IMR-90 (cell line): ENCODE measurements at regions of chr9 and their contacts with region 1.

Region 1: GRCh38 chr9:7055201-7055903 is 297.6 kb downstream of the KDM4C start:
- DNase-seq: no peak
- ATAC-seq: no peak
- H3K4me3 ChIP-seq: no peak overlapping the region
- H3K27ac ChIP-seq: no peak overlapping the region
- H3K4me1 ChIP-seq: peaks cover 3% of the 10 kb centered on the region
- H3K27me3 ChIP-seq: no peaks in the 10 kb centered on the region
- CTCF ChIP-seq: no peak
- POLR2A ChIP-seq: no peak
- RAD21 ChIP-seq: no peak

Region 2: GRCh38 chr9:6715755-6716643 is 339.4 kb before region 1 on chr9:
- CTCF ChIA-PET with region 1: no interaction called
- POLR2A ChIA-PET with region 1: no interaction called
- dilution Hi-C with region 1: no loop called
- in situ Hi-C with region 1: no loop called
- intact Hi-C with region 1: no loop called
- DNase-seq: no peak
- ATAC-seq: peak; percentile 81
- H3K4me3 ChIP-seq: peak overlapping the region; percentile 43
- H3K27ac ChIP-seq: no peak overlapping the region; the same call in 1 of the 2 replicates
- H3K4me1 ChIP-seq: peaks cover 2% of the 10 kb centered on the region; the same call in 1 of the 2 replicates
- H3K27me3 ChIP-seq: peaks cover 2% of the 10 kb centered on the region; the same call in 1 of the 2 replicates
- CTCF ChIP-seq: no peak
- POLR2A ChIP-seq: no peak
- RAD21 ChIP-seq: no peak

Region 3: GRCh38 chr9:6907772-6908381 is 147.5 kb before region 1 on chr9:
- CTCF ChIA-PET with region 1: interaction called, 4 read pairs
- POLR2A ChIA-PET with region 1: no interaction called
- dilution Hi-C with region 1: no loop called
- in situ Hi-C with region 1: no loop called
- intact Hi-C with region 1: loop called (anchors 2 kb)
- DNase-seq: peak; percentile 55
- ATAC-seq: peak; percentile 71
- H3K4me3 ChIP-seq: no peak overlapping the region
- H3K27ac ChIP-seq: no peak overlapping the region
- H3K4me1 ChIP-seq: no peaks in the 10 kb centered on the region
- H3K27me3 ChIP-seq: no peaks in the 10 kb centered on the region
- CTCF ChIP-seq: peak; percentile 82
- POLR2A ChIP-seq: no peak
- RAD21 ChIP-seq: peak; percentile 85

Region 4: DNA sequence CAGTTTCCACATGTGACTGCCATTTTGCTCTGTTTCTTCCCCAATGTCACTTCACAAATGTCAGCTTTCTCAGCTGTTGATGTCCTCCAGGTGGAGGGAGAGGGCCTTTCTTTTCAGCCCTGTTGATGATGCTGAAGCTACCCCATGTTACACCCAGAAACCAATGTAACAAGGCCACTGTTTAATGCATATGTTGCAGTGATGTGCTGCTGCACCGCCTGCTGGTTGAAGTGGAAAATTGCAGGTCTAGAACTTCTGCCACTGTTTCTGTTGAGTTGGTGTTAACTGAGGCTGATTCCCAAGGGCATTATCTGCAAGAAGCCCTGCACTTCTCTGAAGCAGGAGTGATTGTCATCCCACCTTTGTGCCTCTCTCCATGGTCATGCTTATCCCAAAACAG is 130.8 kb after region 1 on chr9:
- CTCF ChIA-PET with region 1: interaction called, 13 read pairs
- POLR2A ChIA-PET with region 1: interaction called, 5 read pairs
- dilution Hi-C with region 1: no loop called
- in situ Hi-C with region 1: no loop called
- intact Hi-C with region 1: loop called (anchors 1 kb)
- DNase-seq: peak; percentile 37
- ATAC-seq: peak; percentile 63
- H3K4me3 ChIP-seq: no peak overlapping the region
- H3K27ac ChIP-seq: no peak overlapping the region
- H3K4me1 ChIP-seq: peaks cover 2% of the 10 kb centered on the region; the same call in 1 of the 2 replicates
- H3K27me3 ChIP-seq: no peaks in the 10 kb centered on the region
- CTCF ChIP-seq: peak; percentile 54
- POLR2A ChIP-seq: no peak
- RAD21 ChIP-seq: peak; percentile 54

Region 5: DNA sequence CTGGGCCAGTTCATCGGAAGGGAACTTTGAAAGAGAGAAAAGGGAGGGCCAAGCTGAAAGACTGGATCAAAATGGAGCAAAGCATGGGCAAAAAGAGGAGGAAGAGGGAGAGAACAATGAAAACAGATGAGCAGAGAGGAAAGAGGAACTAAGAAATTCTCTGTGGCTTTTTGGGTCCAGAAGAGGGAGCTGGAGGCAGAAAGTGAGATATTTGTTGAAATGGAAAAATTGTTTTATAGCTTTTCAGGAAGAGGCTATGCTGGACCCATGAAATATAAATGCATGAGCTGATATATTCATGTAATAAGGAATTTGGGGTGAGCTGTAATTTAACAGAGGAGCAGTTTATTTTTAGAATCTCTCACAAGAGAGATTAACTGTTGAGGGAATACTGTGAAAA is 286.9 kb after region 1 on chr9:
- CTCF ChIA-PET with region 1: no interaction called
- POLR2A ChIA-PET with region 1: no interaction called
- dilution Hi-C with region 1: no loop called
- in situ Hi-C with region 1: no loop called
- intact Hi-C with region 1: loop called (anchors 10 kb)
- DNase-seq: no peak
- ATAC-seq: peak; percentile 46; the same call in 1 of the 2 replicates
- H3K4me3 ChIP-seq: no peak overlapping the region
- H3K27ac ChIP-seq: peak overlapping the region; percentile 55; the same call in 1 of the 2 replicates
- H3K4me1 ChIP-seq: peaks cover 3% of the 10 kb centered on the region
- H3K27me3 ChIP-seq: no peaks in the 10 kb centered on the region
- CTCF ChIP-seq: peak; percentile 24; the same call in 1 of the 2 replicates
- POLR2A ChIP-seq: no peak
- RAD21 ChIP-seq: 0 out of 2 replicates have a peak, but pooled peaks have one; percentile 2

Region 6: GRCh38 chr9:7536310-7536939 is 481.1 kb after region 1 on chr9:
- CTCF ChIA-PET with region 1: interaction called, 8 read pairs
- POLR2A ChIA-PET with region 1: no interaction called
- dilution Hi-C with region 1: no loop called
- in situ Hi-C with region 1: loop called (anchors 10 kb)
- intact Hi-C with region 1: loop called (anchors 1 kb)
- DNase-seq: peak; percentile 56
- ATAC-seq: peak; percentile 94
- H3K4me3 ChIP-seq: no peak overlapping the region
- H3K27ac ChIP-seq: no peak overlapping the region
- H3K4me1 ChIP-seq: no peaks in the 10 kb centered on the region
- H3K27me3 ChIP-seq: no peaks in the 10 kb centered on the region; the same call in 1 of the 2 replicates
- CTCF ChIP-seq: peak; percentile 53
- POLR2A ChIP-seq: no peak
- RAD21 ChIP-seq: peak; percentile 61